ENCODE measurements at regions of chr2 and their contacts with region 1.

Region 1: DNA sequence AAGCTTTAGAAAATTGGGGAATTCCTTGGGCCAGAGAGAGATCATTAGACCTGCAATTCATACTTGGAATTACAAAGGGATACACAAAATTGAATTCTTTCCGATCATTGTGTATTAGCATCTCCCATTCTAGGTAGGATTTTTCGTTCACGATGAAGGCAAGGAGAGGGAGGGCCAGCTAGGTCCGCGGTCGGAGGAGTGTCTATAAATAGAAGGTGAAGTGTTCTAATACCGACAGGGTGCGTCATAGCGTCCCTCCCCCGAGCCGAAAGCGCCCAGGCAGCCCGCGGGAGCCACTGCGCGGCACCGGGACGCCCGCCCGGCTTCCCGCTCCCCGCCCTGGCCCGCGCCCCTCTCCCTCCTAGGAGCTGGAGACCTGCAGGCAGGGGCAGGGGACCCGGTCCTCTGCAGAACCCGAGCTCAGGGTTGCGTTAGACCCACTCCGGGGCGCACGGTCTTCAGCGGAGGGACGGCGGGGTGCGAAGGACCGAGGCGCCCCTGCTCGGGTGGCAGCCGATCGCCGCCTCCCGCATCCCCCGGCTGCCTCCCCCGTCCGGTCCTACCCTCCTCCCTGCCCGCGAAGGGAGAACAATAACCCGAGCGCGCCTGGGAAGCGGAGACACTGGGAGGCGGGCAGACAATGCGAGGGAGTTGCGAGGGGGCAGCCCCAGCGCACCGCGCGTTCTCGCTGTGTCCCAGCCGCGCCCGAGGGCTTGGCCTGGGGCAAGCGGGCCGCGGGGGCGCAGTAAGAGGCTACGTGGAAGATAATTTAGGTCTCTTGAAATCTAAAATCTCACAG is 114.2 kb upstream of the SERTAD2 start:
- DNase-seq: peak; percentile 89 to 90
- H3K4me3 ChIP-seq: peak overlapping the region; percentile 47
- H3K4me3 Mint-ChIP-seq: peak overlapping the region; percentile 78
- H3K27ac Mint-ChIP-seq: peak overlapping the region; percentile 84
- H3K4me1 ChIP-seq: peaks cover 28% of the 10 kb centered on the region
- H3K4me1 Mint-ChIP-seq: peaks cover 27% of the 10 kb centered on the region
- H3K27me3 ChIP-seq: no peaks in the 10 kb centered on the region
- H3K27me3 Mint-ChIP-seq: no peaks in the 10 kb centered on the region
- CTCF ChIP-seq: no peak

Region 2: GRCh38 chr2:64404002-64404731 is 363.7 kb before region 1 on chr2:
- CTCF ChIA-PET with region 1: no interaction called
- POLR2A ChIA-PET with region 1: no interaction called
- intact Hi-C with region 1: no loop called
- DNase-seq: no peak
- H3K4me3 ChIP-seq: no peak overlapping the region
- H3K4me3 Mint-ChIP-seq: no peak overlapping the region
- H3K27ac Mint-ChIP-seq: no peak overlapping the region
- H3K4me1 ChIP-seq: peaks cover 56% of the 10 kb centered on the region
- H3K4me1 Mint-ChIP-seq: peaks cover 41% of the 10 kb centered on the region
- H3K27me3 ChIP-seq: no peaks in the 10 kb centered on the region
- H3K27me3 Mint-ChIP-seq: no peaks in the 10 kb centered on the region
- CTCF ChIP-seq: no peak

Region 3: DNA sequence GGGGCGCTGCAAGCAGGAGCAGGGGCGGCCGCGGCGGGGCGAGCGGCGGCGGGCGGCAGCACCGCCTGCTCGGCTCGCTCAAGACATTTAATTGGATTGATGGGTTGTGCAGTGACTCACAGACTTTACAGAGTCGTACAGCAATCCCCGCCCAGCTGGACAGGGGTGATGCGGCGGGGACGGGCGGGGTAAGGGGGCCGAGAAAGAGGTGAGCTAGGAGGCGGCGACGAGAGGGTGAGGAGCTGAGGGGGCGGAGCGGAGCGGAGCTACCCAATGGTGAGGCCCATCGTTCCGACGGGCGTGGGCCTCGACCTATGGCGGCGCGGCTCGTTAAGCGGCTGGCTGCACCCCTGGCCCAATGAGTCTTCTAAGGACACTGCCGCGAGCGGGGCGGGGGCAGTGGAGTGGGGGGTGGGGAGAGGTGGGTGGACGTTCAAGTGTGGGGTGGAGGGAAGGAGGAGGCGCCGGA is 17.0 kb before region 1 on chr2:
- CTCF ChIA-PET with region 1: interaction called, 15 read pairs
- POLR2A ChIA-PET with region 1: interaction called, 22 read pairs
- intact Hi-C with region 1: loop called (anchors 1 kb)
- DNase-seq: peak; percentile 99
- H3K4me3 ChIP-seq: peak overlapping the region; percentile 73
- H3K4me3 Mint-ChIP-seq: peak overlapping the region; percentile 96
- H3K27ac Mint-ChIP-seq: peak overlapping the region; percentile 93
- H3K4me1 ChIP-seq: peaks cover 18% of the 10 kb centered on the region; the same call in 1 of the 2 replicates
- H3K4me1 Mint-ChIP-seq: peaks cover 16% of the 10 kb centered on the region
- H3K27me3 ChIP-seq: no peaks in the 10 kb centered on the region
- H3K27me3 Mint-ChIP-seq: no peaks in the 10 kb centered on the region
- CTCF ChIP-seq: no peak

Region 4: DNA sequence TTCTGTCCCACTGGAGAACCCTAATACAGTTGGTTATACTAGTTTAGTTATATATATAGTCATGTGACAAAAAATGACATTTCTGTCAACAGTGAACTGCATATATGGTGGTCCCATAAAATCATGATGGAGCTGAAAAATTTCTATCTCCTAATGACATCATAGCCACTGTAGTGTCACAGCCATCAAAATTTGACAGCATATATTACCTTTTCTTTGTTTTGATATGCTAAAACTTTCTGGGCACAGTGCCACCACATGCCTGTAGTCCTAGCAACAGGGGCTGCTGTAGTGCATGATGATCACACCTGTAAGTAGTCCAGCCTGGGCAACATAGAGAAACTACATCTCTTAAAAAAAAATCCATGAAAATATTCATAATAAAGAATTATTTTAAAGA is 41.3 kb after region 1 on chr2:
- CTCF ChIA-PET with region 1: no interaction called
- POLR2A ChIA-PET with region 1: no interaction called
- intact Hi-C with region 1: no loop called
- DNase-seq: no peak
- H3K4me3 ChIP-seq: no peak overlapping the region
- H3K4me3 Mint-ChIP-seq: no peak overlapping the region
- H3K27ac Mint-ChIP-seq: no peak overlapping the region
- H3K4me1 ChIP-seq: no peaks in the 10 kb centered on the region
- H3K4me1 Mint-ChIP-seq: no peaks in the 10 kb centered on the region
- H3K27me3 ChIP-seq: no peaks in the 10 kb centered on the region
- H3K27me3 Mint-ChIP-seq: no peaks in the 10 kb centered on the region
- CTCF ChIP-seq: no peak

Region 5: DNA sequence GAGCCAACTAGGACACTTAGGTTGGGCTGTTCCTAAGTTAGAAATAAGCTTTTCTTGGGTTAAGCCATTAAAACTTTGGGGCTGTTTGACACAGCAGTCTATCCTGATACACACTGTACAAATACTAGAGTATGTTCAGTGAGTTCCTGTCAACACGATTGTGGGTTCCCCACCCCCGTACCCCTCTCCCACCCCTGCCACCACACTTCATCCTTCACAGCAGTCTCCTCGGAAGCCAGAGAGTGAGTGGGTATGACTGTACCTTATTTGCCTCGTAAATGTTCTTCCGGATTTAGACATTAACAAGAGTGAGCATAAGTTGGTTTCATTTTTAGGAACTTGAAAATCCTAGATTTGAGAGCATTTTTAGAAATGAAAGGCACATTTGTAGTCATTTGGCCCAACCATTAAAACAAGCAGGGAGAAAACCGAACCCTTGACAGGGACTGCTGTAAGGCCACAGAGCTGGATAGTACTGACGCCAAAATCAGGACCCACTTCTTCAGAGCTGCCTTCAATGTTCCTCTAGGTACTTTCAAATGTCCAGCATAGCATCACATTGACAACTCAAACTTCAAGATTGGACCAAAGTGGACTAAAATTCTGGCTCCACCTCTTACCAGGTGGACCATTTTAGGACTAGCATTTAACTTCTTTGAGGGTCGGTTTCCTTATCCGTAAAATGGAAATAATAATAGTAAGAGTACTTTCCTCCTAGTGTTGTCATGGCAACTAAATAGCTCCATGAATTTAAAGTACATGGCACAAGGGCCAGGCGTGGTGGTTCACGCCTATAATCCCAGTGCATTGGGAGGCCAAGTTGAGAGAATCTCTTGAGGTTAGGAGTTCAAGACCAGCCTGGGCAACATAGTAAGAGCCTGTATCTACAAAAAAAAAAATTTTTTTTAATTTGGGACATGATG is 52.2 kb after region 1 on chr2:
- CTCF ChIA-PET with region 1: no interaction called
- POLR2A ChIA-PET with region 1: no interaction called
- intact Hi-C with region 1: loop called (anchors 5 kb)
- DNase-seq: no peak
- H3K4me3 ChIP-seq: no peak overlapping the region
- H3K4me3 Mint-ChIP-seq: no peak overlapping the region
- H3K27ac Mint-ChIP-seq: no peak overlapping the region
- H3K4me1 ChIP-seq: peaks cover 43% of the 10 kb centered on the region
- H3K4me1 Mint-ChIP-seq: peaks cover 22% of the 10 kb centered on the region
- H3K27me3 ChIP-seq: no peaks in the 10 kb centered on the region
- H3K27me3 Mint-ChIP-seq: no peaks in the 10 kb centered on the region
- CTCF ChIP-seq: no peak